ENCODE measurements at regions of chr2 and their contacts with region 1.

Region 1: DNA sequence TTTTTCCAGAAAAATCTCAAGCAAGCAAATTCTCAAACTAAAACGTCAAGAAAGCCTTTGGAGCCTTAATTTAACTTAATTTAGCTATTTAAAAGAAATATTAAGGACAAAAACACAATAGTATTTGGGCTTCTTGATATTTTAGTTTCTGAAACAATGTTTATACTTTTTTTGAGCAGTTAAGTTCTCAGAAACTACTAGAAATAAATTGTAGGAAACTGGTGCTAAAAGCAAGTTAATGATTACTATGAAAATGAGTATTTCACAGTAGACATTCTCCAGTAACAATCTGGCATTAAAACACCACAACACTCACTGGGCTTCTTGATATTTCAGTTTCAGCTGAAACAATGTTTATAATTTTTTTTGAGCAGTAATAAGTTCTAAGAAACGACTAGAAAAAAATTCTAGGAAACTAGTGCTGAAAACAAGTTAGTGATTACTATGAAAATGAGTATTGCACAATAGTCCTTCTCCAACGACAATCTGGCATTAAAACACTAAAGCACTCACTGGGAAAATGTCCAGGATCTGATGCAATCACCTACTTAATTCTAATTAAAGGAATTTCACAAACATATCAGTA is 45.1 kb downstream of the TRAK2 start:
- DNase-seq: no peak
- ATAC-seq: peak; percentile 50 to 53
- H3K4me3 ChIP-seq: peak overlapping the region; percentile 59
- H3K27ac ChIP-seq: no peak overlapping the region
- H3K4me1 ChIP-seq: peaks cover 1% of the 10 kb centered on the region
- H3K27me3 ChIP-seq: no peaks in the 10 kb centered on the region

Region 2: GRCh38 chr2:201307876-201308275 is 98.3 kb before region 1 on chr2:
- intact Hi-C with region 1: no loop called
- DNase-seq: no peak
- ATAC-seq: no peak
- H3K4me3 ChIP-seq: no peak overlapping the region
- H3K27ac ChIP-seq: no peak overlapping the region
- H3K4me1 ChIP-seq: no peaks in the 10 kb centered on the region
- H3K27me3 ChIP-seq: no peaks in the 10 kb centered on the region

Region 3: DNA sequence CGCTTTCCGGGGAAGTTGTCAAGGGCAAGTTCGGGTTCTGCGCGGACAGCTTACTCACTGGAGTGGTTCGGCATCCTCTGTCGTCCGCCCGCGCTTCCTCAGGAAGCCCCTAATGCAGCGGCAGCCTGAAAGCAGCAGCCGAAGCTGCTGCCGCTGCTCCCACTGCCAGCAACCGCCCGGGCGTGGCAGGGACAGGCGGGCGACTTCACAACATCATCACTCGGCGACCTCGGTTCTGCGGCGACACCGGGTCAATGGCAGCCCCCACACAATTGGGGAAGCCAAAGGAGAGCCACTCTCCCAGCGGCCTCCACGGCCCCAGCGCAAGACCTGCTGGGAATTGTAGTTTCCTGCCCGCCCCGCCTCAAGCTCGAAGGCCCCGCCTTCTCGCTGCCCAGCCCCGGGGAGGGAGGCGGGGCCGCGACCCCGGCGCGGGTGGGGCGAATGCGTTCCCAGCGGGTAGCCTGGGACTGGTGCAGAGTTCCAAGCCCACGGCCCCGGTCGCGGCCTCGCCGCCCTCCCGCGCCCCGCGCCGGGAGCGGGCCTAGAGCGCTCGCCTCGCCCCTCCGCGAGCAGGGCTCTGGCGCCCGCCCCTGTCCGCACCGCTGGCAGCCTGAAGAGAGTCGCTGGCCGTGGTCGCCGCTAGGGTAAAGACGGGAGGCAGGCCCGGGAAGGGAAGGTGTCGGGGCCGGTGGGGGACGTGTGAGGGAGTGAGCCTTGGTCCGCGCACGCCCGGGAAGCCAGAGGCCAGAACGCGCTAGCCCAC is 45.3 kb after region 1 on chr2 and contains the starts of genes STRADB and TRAK2:
- intact Hi-C with region 1: loop called in 3 of 4 experiments (anchors 5 kb)
- DNase-seq: peak; percentile 97 to 98 (median 98)
- ATAC-seq: peak; percentile 99
- H3K4me3 ChIP-seq: peak within 1 kb of the TSS; percentile 75
- H3K27ac ChIP-seq: peak within 1 kb of the TSS; percentile 77
- H3K4me1 ChIP-seq: peaks cover 3% of the 10 kb centered on the region
- H3K27me3 ChIP-seq: no peaks in the 10 kb centered on the region
- total RNA-seq, gene STRADB: 35.4 to 51.3 (median 43.4) TPM
- total RNA-seq, gene TRAK2: 98.2 to 141 (median 134) TPM

Region 4: GRCh38 chr2:201500534-201500933 is 94.4 kb after region 1 on chr2:
- intact Hi-C with region 1: no loop called
- DNase-seq: no peak
- ATAC-seq: no peak
- H3K4me3 ChIP-seq: no peak overlapping the region
- H3K27ac ChIP-seq: no peak overlapping the region
- H3K4me1 ChIP-seq: no peaks in the 10 kb centered on the region
- H3K27me3 ChIP-seq: no peaks in the 10 kb centered on the region